ENCODE measurements at regions of chr10 and their contacts with region 1.

Region 1: DNA sequence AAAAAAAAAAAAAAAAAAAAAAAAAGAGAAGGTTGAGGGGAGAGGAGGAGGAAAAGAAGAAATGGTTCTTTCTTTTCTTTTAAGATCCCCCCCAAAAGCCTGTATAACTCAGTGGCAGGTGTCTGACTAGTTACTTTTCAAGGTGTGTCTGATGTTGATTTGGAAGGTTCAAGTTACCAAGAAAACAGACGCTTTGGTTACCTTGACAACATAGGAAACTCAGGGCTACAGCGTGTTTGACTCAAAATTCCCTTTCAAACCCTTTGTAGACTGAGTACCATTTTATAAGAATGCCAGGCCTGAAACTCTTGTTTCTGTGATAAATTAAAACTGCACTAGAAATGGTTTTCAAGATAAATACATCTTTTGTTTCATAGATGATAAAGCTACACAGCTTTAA is 286.8 kb downstream of the SKIDA1 start:
- DNase-seq: no peak
- H3K27ac ChIP-seq: no peak overlapping the region
- CTCF ChIP-seq: no peak

Region 2: GRCh38 chr10:21161647-21162046 is 77.1 kb before region 1 on chr10:
- CTCF ChIA-PET with region 1: no interaction called
- POLR2A ChIA-PET with region 1: no interaction called
- DNase-seq: no peak
- H3K27ac ChIP-seq: no peak overlapping the region
- CTCF ChIP-seq: no peak

Region 3: GRCh38 chr10:21172930-21173811 is 65.5 kb before region 1 on chr10:
- CTCF ChIA-PET with region 1: interaction called, 11 read pairs
- POLR2A ChIA-PET with region 1: no interaction called
- DNase-seq: no peak
- H3K27ac ChIP-seq: peak overlapping the region; percentile 59; the same call in 1 of the 2 replicates
- CTCF ChIP-seq: no peak

Region 4: GRCh38 chr10:21184216-21184615 is 54.5 kb before region 1 on chr10:
- CTCF ChIA-PET with region 1: no interaction called
- POLR2A ChIA-PET with region 1: no interaction called
- DNase-seq: peak; percentile 67
- H3K27ac ChIP-seq: no peak overlapping the region
- CTCF ChIP-seq: no peak

Region 5: DNA sequence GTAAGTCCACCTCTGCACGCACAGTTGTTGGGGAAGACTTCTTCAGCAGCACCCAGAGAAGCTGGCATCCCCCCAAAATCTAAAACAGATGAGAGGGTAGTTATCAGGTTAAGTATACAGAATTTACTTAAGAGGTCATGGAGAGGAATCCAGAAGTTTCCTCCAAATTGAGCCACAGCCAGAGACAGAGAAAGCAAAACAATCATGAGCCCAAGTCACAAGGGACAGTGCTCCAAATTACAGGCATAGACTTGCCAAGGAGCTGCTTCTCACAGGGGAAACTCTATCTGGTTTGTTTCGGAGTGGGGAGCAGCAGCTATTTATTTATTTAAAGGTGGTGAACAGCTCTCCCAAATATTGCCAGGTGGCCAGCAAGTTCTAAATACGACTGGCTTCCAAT is 21.6 kb before region 1 on chr10:
- CTCF ChIA-PET with region 1: no interaction called
- POLR2A ChIA-PET with region 1: no interaction called
- DNase-seq: no peak
- H3K27ac ChIP-seq: no peak overlapping the region
- CTCF ChIP-seq: no peak

Region 6: DNA sequence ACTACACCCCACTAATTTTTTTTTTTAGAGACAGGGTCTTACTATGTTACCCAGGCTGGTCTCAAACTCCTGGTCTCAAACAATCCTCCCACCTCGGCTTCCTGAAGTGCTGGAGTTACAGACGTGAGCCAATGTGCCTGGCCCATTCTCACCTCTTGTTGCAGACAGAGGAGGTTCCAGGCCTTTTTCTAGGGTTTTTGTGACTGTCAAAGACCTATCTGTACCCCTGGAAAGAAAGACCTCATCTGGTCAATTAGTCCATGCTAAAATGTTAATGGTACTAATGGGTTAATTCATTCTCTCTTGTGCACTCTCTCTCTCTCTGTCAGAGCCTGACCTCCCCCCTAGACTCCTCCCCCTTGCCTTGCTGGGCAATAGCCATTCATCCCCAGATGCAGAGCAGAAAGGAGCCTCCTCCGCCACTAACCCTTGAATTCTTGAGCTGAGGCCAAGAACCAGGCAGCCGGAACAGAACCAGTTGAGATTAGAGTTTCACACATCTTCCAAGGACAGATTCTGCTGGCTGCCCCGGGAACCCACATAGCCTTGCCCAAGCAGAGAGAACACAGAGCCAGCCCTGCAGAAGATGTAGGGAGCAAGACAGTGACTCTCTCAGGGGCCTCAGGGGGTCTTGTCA is 77.0 kb after region 1 on chr10:
- CTCF ChIA-PET with region 1: no interaction called
- POLR2A ChIA-PET with region 1: no interaction called
- DNase-seq: peak; percentile 79
- H3K27ac ChIP-seq: peak overlapping the region; percentile 90
- CTCF ChIP-seq: no peak